B cell (primary cell): ENCODE measurements at regions of chr5 and their contacts with region 1.

Region 1: DNA sequence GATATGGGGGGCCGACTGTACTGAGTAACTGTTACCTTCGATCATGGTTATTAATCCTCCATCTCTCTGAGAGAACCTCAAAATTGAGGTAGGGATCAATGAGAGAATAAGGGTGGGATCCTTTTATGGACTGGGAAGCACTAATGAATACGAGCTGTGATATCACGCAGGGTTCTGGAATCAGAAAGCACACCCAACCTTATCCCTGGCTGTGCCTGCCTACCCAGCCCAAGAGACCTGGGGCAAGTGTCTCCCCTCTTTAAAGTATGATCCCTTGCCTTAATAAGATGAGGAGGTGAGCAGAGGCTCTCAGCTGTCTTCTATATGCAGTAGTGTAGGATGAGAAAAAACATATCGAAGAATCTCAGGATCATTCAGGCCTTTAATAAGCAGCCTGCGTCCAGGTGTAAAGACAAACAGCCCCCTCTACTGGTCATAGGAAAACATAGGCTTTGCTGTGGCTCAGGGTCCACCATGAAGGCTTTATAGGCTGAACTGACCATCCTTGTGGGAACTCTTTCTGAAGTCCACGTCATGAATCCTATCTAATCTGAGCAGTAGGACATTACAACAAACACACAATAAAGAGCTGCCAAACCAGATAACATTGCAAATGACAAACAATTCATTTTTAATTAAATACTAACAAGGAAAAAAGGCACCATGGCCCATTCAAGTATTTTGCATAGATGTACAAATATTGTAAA is 16.8 kb downstream of the NIPAL4 start:
- DNase-seq: peak; percentile 73
- ATAC-seq: peak; percentile 39
- H3K4me3 ChIP-seq: no peak overlapping the region
- H3K4me3 Mint-ChIP-seq: no peak overlapping the region
- H3K27ac ChIP-seq: peak overlapping the region; percentile 32 to 69
- H3K27ac Mint-ChIP-seq: peak overlapping the region; percentile 98
- H3K4me1 ChIP-seq: peaks cover 55 to 72% of the 10 kb centered on the region in 2 donors
- H3K4me1 Mint-ChIP-seq: peaks cover 78% of the 10 kb centered on the region
- H3K27me3 ChIP-seq: no peaks in the 10 kb centered on the region
- H3K27me3 Mint-ChIP-seq: no peaks in the 10 kb centered on the region
- CTCF ChIP-seq: peak; percentile 84

Region 2: GRCh38 chr5:157328277-157328912 is 148.5 kb before region 1 on chr5:
- CTCF ChIA-PET with region 1: interaction called, 8 read pairs
- POLR2A ChIA-PET with region 1: no interaction called
- intact Hi-C with region 1: loop called (anchors 2 kb)
- DNase-seq: peak; percentile 78
- ATAC-seq: peak; percentile 98
- H3K4me3 ChIP-seq: no peak overlapping the region
- H3K4me3 Mint-ChIP-seq: no peak overlapping the region
- H3K27ac ChIP-seq: no peak overlapping the region
- H3K27ac Mint-ChIP-seq: no peak overlapping the region
- H3K4me1 ChIP-seq: no peaks in the 10 kb centered on the region
- H3K4me1 Mint-ChIP-seq: peaks cover 6% of the 10 kb centered on the region
- H3K27me3 ChIP-seq: no peaks in the 10 kb centered on the region
- H3K27me3 Mint-ChIP-seq: no peaks in the 10 kb centered on the region
- CTCF ChIP-seq: peak; percentile 96

Region 3: DNA sequence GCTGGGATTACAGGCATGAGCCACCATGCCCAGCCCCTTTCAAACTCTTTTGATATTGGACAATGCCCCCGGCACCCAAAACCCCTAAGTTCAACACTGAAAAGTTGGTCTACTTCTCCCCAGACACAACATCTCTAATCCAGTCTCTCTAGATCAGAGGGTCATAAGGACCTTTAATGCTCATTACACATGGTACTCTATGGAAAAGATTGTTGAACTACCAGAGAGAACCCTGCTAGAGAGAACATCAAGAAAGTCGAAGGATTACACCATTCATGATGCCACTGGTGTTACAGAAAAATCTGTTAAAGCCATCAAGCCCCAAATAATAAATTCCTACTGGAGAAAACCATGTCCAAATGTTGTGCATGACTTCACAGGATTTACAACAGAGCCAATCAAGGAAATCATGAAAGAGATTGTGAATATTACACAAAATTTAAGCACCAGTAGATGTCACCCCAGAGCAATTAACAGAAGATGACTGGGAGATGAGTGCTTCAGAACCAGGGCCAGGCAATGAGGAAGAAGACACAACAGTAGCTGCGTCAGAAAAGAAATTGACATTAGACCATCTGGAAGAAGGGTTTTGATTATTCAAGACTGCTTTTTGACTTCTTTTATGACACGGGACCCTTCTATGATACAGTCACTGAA is 45.2 kb before region 1 on chr5:
- CTCF ChIA-PET with region 1: interaction called, 162 read pairs
- POLR2A ChIA-PET with region 1: interaction called, 12 read pairs
- intact Hi-C with region 1: loop called (anchors 1 kb)
- DNase-seq: peak; percentile 84
- ATAC-seq: peak; percentile 100
- H3K4me3 ChIP-seq: peak overlapping the region in 1 of 5 experiments; percentile 30
- H3K4me3 Mint-ChIP-seq: peak overlapping the region; percentile 40
- H3K27ac ChIP-seq: peak overlapping the region; percentile 28 to 67
- H3K27ac Mint-ChIP-seq: peak overlapping the region; percentile 88
- H3K4me1 ChIP-seq: peaks cover 8 to 11% of the 10 kb centered on the region in 2 donors
- H3K4me1 Mint-ChIP-seq: peaks cover 18% of the 10 kb centered on the region
- H3K27me3 ChIP-seq: no peaks in the 10 kb centered on the region
- H3K27me3 Mint-ChIP-seq: no peaks in the 10 kb centered on the region
- CTCF ChIP-seq: peak; percentile 76

Region 4: DNA sequence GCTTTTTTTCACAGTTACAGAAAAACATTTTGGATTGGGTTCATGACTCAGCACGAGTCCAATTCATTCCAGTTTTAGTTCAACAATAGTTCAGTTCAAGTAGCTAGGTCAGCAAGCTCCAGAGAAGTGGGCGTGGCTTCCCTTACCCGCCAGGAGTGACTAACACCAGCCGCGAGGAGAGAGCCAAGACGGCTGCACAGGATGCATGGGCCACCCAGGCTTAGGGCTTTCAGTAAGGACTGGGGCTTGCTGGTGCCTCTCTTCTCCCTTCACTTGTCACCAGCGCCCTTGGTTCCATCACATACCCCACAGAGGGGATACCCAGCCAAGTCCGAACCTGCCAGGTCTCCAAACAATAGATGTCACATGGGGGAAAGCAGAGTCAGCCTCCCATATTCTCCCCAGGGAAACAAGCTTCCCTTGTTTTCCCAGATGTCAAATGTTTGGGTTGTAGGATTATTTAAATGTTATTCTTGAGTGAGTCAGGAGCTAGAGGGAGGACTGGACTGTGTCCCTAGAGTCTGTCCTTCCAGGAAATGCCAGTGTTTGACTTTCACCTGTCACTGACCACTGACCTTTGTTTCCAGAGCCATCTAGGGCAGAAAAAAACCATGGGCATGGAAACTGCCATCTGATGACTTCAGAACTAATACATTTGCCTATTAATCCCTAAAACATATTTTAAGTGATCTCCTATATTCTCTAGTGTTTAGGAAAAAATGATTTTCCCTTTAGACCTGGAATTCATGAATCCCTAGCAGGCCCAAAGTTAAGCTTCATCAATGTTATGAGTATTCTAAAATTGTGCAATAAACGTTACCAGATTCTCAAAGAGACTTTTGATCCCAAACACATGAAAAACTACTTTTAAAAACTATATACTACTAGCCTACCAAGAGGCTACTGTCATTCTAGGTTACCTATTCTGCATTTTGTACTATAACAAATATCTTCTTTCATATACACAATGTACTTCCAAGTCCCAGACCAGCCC is 35.1 kb after region 1 on chr5:
- CTCF ChIA-PET with region 1: interaction called, 3 read pairs
- POLR2A ChIA-PET with region 1: interaction called, 4 read pairs
- intact Hi-C with region 1: loop called (anchors 5 kb)
- DNase-seq: no peak
- ATAC-seq: no peak
- H3K4me3 ChIP-seq: no peak overlapping the region
- H3K4me3 Mint-ChIP-seq: no peak overlapping the region
- H3K27ac ChIP-seq: peak overlapping the region; percentile 45 to 83
- H3K27ac Mint-ChIP-seq: peak overlapping the region; percentile 74
- H3K4me1 ChIP-seq: peaks cover 55 to 63% of the 10 kb centered on the region in 2 donors
- H3K4me1 Mint-ChIP-seq: peaks cover 77% of the 10 kb centered on the region
- H3K27me3 ChIP-seq: no peaks in the 10 kb centered on the region
- H3K27me3 Mint-ChIP-seq: no peaks in the 10 kb centered on the region
- CTCF ChIP-seq: no peak